Activated CD8-positive, alpha-beta T cell treated with anti-CD3 and anti-CD28 coated beads for 36 hours (primary cell): ENCODE measurements at regions of chr1 and their contacts with region 1.

Region 1: GRCh38 chr1:29033829-29034466 is 89.8 kb downstream of the TMEM200B start:
- DNase-seq: no peak
- ATAC-seq: peak; percentile 51
- H3K4me3 Mint-ChIP-seq: no peak overlapping the region
- H3K27ac Mint-ChIP-seq: peak overlapping the region; percentile 64
- H3K4me1 Mint-ChIP-seq: peaks cover 2% of the 10 kb centered on the region
- H3K27me3 Mint-ChIP-seq: no peaks in the 10 kb centered on the region
- CTCF ChIP-seq: peak; percentile 78

Region 2: DNA sequence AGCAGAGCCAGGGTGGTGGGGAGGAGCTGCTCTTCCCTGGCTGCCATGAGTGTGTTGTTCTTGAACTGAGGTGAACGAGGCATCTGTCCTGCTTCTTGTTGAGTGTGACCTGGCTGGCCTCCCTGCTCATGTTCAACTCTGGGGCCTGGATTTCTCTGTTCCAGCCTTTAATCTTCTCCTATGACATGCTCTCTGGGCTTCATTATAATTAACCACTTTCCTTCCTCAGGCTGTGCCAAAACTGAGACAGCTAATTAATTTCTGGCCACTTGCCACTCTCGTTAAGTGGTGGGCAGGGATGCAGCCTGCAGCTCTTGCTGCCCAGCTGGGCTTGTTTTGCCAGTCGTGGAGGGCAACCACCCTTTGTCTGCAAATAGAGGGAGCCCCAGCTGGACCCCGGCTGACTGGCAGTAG is 198.7 kb before region 1 on chr1:
- CTCF ChIA-PET with region 1: no interaction called
- POLR2A ChIA-PET with region 1: no interaction called
- intact Hi-C with region 1: no loop called
- DNase-seq: no peak
- ATAC-seq: no peak
- H3K4me3 Mint-ChIP-seq: no peak overlapping the region
- H3K27ac Mint-ChIP-seq: no peak overlapping the region
- H3K4me1 Mint-ChIP-seq: no peaks in the 10 kb centered on the region
- H3K27me3 Mint-ChIP-seq: peaks cover 5% of the 10 kb centered on the region
- CTCF ChIP-seq: no peak

Region 3: DNA sequence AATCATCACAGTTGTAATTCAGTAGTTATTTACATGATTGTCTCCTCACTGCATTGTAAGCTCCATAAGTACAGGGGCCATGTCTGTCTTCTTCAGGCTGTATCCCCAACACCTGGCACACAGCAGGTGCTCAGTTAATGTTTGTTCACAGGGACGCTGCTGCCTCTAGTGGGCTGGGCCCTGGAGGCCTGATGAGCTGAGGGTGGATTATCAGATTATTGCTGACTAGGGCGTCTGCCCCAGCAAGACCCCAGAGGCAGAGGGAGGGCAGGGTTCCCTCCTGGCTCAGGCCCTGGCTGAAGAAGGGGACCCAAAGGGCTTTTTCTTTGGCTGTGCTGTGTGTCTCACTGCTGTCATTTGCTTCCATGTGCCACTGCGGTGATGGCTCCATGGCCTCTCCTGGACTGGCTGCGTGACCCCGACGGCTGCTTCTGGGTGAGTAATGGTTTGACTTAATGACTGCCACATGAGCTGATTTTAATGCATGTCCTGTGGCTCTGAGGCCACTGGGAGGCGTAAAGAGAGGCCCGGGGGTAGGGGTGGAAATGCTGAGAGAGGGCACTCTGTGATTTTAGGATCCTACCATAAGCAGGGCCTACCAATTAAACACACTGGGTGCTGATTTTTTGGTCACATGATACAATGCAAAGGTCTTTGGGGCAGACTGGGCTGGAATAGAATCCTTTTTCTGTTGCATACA is 140.4 kb before region 1 on chr1:
- CTCF ChIA-PET with region 1: interaction called, 30 read pairs
- POLR2A ChIA-PET with region 1: interaction called, 3 read pairs
- intact Hi-C with region 1: no loop called
- DNase-seq: peak; percentile 51
- ATAC-seq: peak; percentile 72
- H3K4me3 Mint-ChIP-seq: no peak overlapping the region
- H3K27ac Mint-ChIP-seq: no peak overlapping the region
- H3K4me1 Mint-ChIP-seq: peaks cover 36% of the 10 kb centered on the region
- H3K27me3 Mint-ChIP-seq: no peaks in the 10 kb centered on the region
- CTCF ChIP-seq: peak; percentile 25

Region 4: DNA sequence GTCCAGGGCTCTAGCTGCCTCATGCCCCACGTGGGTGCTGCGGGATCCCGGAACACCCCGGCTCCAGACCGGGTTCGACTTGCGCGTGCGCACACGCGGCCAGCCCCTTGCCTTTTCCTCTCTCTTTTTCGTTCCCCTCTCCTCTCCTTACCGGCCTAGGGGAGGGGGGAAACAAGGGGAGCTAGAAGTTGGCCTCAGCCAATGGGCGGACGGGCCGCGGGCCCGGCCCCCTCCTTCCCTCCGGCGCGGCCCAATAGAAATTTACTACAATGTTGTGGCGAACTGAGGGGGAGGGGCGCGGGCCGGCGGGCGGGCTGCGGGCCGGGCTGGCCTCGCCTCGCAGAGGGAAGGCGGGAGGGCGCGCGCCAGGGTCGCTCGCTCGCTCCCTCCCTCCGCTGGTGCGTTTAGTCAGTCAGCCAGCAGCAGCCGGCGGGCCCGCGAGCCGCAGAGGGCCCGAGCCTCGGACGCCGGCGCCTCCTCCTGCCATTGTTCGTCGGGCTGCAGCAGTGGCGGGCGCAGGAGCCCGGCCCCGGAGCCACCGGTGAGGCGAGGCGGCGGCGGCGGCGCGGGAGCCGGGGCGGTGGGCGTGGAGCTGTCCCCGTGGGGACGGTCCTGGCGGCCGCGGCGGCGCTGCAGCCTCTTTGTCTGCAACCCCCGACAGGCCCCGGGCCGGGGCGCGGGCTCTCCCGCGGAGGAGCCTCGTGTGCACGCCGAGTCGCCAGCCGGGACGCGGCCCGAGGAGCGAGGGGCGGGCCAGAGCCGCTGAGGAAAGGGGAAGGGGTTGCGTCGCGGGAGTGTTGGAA is 119.5 kb before region 1 on chr1 and contains the start of gene EPB41:
- CTCF ChIA-PET with region 1: interaction called, 29 read pairs
- POLR2A ChIA-PET with region 1: no interaction called
- intact Hi-C with region 1: no loop called
- DNase-seq: peak; percentile 93
- ATAC-seq: peak; percentile 90
- H3K4me3 Mint-ChIP-seq: peak within 1 kb of the TSS; percentile 92
- H3K27ac Mint-ChIP-seq: peak within 1 kb of the TSS; percentile 95
- H3K4me1 Mint-ChIP-seq: peaks cover 48% of the 10 kb centered on the region
- H3K27me3 Mint-ChIP-seq: no peaks in the 10 kb centered on the region
- CTCF ChIP-seq: no peak
- total RNA-seq, gene EPB41: 74.9 to 80.3 TPM

Region 5: GRCh38 chr1:29011775-29012174 is 22.2 kb before region 1 on chr1:
- CTCF ChIA-PET with region 1: interaction called, 12 read pairs
- POLR2A ChIA-PET with region 1: no interaction called
- intact Hi-C with region 1: no loop called
- DNase-seq: no peak
- ATAC-seq: no peak
- H3K4me3 Mint-ChIP-seq: no peak overlapping the region
- H3K27ac Mint-ChIP-seq: peak overlapping the region; percentile 16
- H3K4me1 Mint-ChIP-seq: peaks cover 5% of the 10 kb centered on the region
- H3K27me3 Mint-ChIP-seq: no peaks in the 10 kb centered on the region
- CTCF ChIP-seq: no peak

Region 6: GRCh38 chr1:29117381-29117780 is 83.4 kb after region 1 on chr1:
- CTCF ChIA-PET with region 1: interaction called, 13 read pairs
- POLR2A ChIA-PET with region 1: no interaction called
- intact Hi-C with region 1: no loop called
- DNase-seq: no peak
- ATAC-seq: no peak
- H3K4me3 Mint-ChIP-seq: no peak overlapping the region
- H3K27ac Mint-ChIP-seq: peak overlapping the region; percentile 29
- H3K4me1 Mint-ChIP-seq: peaks cover 10% of the 10 kb centered on the region
- H3K27me3 Mint-ChIP-seq: peaks cover 2% of the 10 kb centered on the region
- CTCF ChIP-seq: no peak

Region 7: GRCh38 chr1:29171089-29171488 is 137.1 kb after region 1 on chr1:
- CTCF ChIA-PET with region 1: no interaction called
- POLR2A ChIA-PET with region 1: no interaction called
- intact Hi-C with region 1: no loop called
- DNase-seq: no peak
- ATAC-seq: no peak
- H3K4me3 Mint-ChIP-seq: no peak overlapping the region
- H3K27ac Mint-ChIP-seq: peak overlapping the region; percentile 76
- H3K4me1 Mint-ChIP-seq: peaks cover 56% of the 10 kb centered on the region
- H3K27me3 Mint-ChIP-seq: no peaks in the 10 kb centered on the region
- CTCF ChIP-seq: no peak

Region 8: DNA sequence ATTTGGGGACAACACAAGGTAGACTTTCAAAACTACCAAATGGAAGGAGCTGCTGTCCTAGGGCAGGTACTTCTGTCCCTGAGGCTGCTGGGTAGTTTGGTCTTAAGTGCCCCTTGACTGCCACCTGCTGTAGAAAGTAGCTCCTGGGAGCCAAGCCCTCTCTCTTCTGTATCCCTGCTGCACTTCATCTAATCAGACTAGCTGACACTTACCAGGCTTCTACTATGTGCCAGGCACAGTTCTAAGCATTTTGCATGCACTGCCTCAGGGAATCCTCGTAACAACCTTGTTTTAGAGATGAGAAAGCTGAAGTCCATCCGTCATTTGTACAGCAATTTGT is 163.6 kb after region 1 on chr1:
- CTCF ChIA-PET with region 1: interaction called, 14 read pairs
- POLR2A ChIA-PET with region 1: no interaction called
- intact Hi-C with region 1: no loop called
- DNase-seq: peak; percentile 61
- ATAC-seq: peak; percentile 94
- H3K4me3 Mint-ChIP-seq: no peak overlapping the region
- H3K27ac Mint-ChIP-seq: no peak overlapping the region
- H3K4me1 Mint-ChIP-seq: peaks cover 12% of the 10 kb centered on the region
- H3K27me3 Mint-ChIP-seq: no peaks in the 10 kb centered on the region
- CTCF ChIP-seq: peak; percentile 38